ENCODE measurements at regions of chr5 and their contacts with region 1.

Region 1: DNA sequence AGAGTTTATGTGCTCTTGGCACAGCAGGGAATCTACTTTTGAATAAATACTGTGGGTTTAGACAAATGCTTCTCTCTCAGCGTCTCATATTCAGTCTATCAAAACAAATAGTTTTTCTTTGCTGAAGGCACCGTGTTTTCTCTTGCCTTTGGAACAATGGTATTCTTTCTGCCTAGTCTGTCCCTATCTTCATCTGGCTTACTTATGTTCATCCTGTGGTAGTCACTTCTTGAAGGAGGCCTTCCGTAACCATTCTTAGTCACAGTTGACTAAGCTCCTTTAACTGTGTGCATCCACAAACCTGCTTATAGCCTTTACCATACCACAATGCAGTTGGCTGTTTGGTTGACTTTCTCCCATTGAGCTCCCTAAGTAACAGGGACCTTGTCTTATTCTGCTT is 45.9 kb downstream of the LARP1 start:
- DNase-seq: no peak
- ATAC-seq: no peak
- H3K4me3 ChIP-seq: no peak overlapping the region
- H3K27ac ChIP-seq: no peak overlapping the region
- H3K4me1 ChIP-seq: no peaks in the 10 kb centered on the region
- H3K27me3 ChIP-seq: no peaks in the 10 kb centered on the region

Region 2: DNA sequence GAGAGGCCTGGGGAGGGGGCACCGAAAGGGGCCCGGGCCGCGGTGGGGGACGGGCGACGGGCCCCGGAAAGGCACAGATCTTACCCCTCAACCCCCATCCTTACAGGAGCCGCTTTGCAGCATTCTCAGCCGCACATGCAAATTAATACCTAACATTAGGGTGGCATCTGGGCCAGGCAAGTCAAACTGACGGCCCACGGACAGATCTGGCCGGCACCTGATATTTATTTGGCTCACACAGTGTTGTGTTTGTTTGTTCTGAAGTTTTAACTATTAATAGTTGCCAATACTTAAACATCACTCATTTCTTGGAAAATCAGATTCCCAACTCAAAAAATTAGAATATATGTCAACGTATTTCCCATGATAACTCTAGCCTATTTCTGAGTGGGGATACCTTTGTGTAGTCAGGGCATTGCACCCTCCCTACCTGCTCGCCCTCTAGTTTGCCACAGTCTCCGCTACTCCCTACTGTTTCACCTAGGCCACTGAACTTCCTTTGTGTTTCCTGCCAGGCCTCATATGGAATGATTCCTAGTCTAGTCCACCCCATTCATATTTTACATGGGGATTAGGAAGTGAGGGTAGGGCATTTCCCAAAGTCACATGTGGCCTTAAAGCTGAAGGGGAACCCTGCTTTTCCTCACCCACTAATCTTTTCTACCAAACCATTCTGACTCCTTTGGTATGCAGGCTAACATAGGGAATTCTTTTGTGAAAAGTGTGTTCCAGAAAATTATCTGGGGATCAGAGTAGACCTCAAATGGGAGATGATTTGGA is 117.8 kb before region 1 on chr5:
- intact Hi-C with region 1: loop called in 1 of 2 experiments (anchors 10 kb)
- DNase-seq: no peak
- ATAC-seq: no peak
- H3K4me3 ChIP-seq: peak overlapping the region in 1 of 2 donors; percentile 36
- H3K27ac ChIP-seq: peak overlapping the region in 1 of 2 donors; percentile 34
- H3K4me1 ChIP-seq: no peaks in the 10 kb centered on the region
- H3K27me3 ChIP-seq: no peaks in the 10 kb centered on the region

Region 3: GRCh38 chr5:155017610-155018009 is 216.5 kb after region 1 on chr5:
- intact Hi-C with region 1: no loop called
- DNase-seq: no peak
- ATAC-seq: no peak
- H3K4me3 ChIP-seq: no peak overlapping the region
- H3K27ac ChIP-seq: no peak overlapping the region
- H3K4me1 ChIP-seq: no peaks in the 10 kb centered on the region
- H3K27me3 ChIP-seq: peaks cover 0 to 1% of the 10 kb centered on the region in 2 donors